ENCODE measurements at regions of chr20 and their contacts with region 1.

Region 1: GRCh38 chr20:25057234-25058050 is 497 bp downstream of the ACSS1 start:
- DNase-seq: peak; percentile 86
- ATAC-seq: peak; percentile 52
- H3K4me3 Mint-ChIP-seq: peak overlapping the region; percentile 74
- H3K27ac Mint-ChIP-seq: peak overlapping the region; percentile 77
- H3K4me1 Mint-ChIP-seq: peaks cover 53% of the 10 kb centered on the region
- H3K27me3 Mint-ChIP-seq: no peaks in the 10 kb centered on the region

Region 2: DNA sequence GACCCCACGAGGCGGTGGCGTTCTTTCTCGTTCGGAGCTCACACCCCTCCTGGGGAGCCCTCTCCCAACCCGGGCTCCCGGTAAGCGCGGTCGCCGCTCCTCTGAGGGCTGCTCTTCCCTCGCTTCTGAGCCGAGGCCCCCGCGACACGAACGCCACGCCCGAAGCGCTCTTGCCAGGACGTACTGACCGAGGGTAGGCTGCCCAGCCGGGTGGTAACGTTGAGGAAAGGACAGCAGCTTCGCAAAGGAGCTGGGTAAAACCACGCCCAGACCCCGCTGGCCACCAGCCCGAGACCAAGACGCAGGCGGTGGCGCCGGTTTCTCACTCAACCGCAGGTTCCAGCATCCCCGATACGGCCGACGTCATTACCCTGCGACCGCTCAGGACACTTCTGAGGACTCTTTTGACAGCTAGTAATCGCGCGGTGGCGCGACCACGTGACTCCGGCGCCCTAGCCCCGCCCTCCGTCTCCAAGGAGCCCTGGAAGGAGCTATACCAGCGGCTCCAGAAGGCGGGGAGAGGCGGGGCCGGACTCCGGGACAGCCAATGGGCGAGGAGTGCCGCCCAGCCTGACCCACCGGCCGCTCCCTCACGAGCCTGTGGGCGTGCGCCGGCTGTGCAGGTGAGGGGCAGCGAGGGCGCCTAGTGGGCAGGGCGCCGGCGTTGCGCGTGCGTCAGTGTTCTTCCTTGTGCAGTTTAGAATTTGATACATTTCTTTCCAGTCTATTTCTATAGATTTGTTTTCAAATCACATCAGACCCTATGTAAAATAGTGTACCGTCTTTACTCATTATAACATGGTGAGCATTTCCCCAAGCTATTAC is 1699.5 kb before region 1 on chr20:
- CTCF ChIA-PET with region 1: no interaction called
- POLR2A ChIA-PET with region 1: no interaction called
- intact Hi-C with region 1: loop called in 1 of 2 experiments (anchors 10 kb)
- DNase-seq: peak; percentile 100
- ATAC-seq: peak; percentile 84
- H3K4me3 Mint-ChIP-seq: peak overlapping the region; percentile 88
- H3K27ac Mint-ChIP-seq: peak overlapping the region; percentile 93
- H3K4me1 Mint-ChIP-seq: peaks cover 15% of the 10 kb centered on the region
- H3K27me3 Mint-ChIP-seq: no peaks in the 10 kb centered on the region

Region 3: DNA sequence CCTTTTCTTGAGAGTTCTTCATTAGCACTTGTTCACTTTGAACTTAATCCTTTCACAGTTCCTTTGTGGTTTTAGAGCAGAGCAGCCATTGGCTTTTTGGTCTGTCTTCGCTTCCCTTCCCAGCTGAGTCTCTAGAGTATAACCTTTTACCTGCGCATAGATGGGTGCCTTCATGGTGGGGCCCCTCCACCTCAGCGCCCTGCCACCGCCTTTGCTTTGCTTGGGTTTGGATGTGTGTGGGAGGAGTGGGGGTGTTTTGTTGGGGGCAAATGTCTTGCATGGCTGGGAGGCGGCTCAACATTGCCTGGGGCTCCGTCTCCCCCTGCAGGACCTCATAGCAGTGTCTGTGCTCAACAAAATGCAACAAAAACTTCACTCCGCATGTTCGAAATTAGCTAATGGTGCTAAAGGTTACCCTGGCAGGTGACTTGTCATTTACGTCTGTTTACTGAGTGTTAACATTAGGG is 202.4 kb after region 1 on chr20:
- CTCF ChIA-PET with region 1: no interaction called
- POLR2A ChIA-PET with region 1: no interaction called
- intact Hi-C with region 1: no loop called
- DNase-seq: peak; percentile 42
- ATAC-seq: peak; percentile 58
- H3K4me3 Mint-ChIP-seq: peak overlapping the region; percentile 13
- H3K27ac Mint-ChIP-seq: peak overlapping the region; percentile 82
- H3K4me1 Mint-ChIP-seq: peaks cover 43% of the 10 kb centered on the region
- H3K27me3 Mint-ChIP-seq: no peaks in the 10 kb centered on the region

Measured in activated CD4-positive, alpha-beta T cell treated with anti-CD3 and anti-CD28 coated beads for 36 hours (primary cell).